Posterior vena cava (tissue), 2 donors: ENCODE measurements at regions of chr5 and their contacts with region 1.

Region 1: GRCh38 chr5:56200856-56201666 is 32.1 kb downstream of the ANKRD55 start:
- DNase-seq: no peak

Region 2: GRCh38 chr5:55936100-55936693 is 264.9 kb before region 1 on chr5:
- intact Hi-C with region 1: loop called in 1 of 2 experiments (anchors 5 kb)
- DNase-seq: peak; percentile 92

Region 3: GRCh38 chr5:56126487-56127179 is 74.4 kb before region 1 on chr5:
- intact Hi-C with region 1: loop called in 1 of 2 experiments (anchors 2 kb)
- DNase-seq: no peak

Region 4: GRCh38 chr5:57298295-57298984 is 1097.4 kb after region 1 on chr5:
- intact Hi-C with region 1: no loop called
- DNase-seq: peak; percentile 85